B cell (primary cell): ENCODE measurements at regions of chr16 and their contacts with region 1.

Region 1: DNA sequence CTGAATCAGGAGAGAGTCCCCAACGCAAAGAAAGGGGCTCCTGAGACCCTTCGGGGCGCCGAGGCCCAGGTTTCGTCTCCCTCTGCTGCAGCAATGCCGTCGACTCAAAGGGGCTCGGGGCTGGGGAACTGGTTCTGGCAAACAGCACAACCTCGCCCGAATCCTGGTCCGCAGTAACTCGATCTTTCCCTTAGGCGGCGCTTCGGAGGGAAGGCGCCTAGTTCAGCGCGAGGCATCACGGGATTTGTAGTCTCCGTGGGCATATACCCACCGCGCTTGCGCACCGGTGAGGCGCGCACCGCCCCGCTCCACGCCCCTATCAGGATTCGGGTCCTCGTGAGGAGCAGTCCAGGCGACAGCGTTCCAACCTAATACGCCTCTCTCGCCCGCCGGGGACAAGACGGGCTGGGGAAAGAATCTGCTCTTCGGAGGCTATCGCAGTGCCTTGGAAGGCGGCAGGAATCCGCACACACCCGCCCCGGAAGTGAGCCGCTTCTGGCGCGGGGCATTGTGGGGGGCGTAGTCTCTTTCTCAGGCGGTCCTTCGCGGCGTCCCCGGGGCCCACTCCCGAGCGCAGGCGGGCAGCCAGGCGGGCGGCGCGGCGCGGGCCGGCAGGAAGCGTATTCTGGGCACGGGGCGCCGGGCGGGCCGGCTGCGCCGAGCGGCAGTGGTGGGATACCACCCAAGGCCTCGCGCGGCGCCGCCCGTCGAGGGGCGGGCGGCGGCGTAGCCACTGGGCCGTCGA is at the start of gene THAP11:
- DNase-seq: peak; percentile 98
- ATAC-seq: peak; percentile 58
- H3K4me3 ChIP-seq: peak within 1 kb of the TSS; percentile 74 to 98 (median 89)
- H3K4me3 Mint-ChIP-seq: peak within 1 kb of the TSS; percentile 96
- H3K27ac ChIP-seq: peak within 1 kb of the TSS; percentile 87 to 96
- H3K27ac Mint-ChIP-seq: peak within 1 kb of the TSS; percentile 98
- H3K4me1 ChIP-seq: peaks cover 31 to 42% of the 10 kb centered on the region in 2 donors
- H3K4me1 Mint-ChIP-seq: peaks cover 36% of the 10 kb centered on the region
- H3K27me3 ChIP-seq: no peaks in the 10 kb centered on the region
- H3K27me3 Mint-ChIP-seq: no peaks in the 10 kb centered on the region
- CTCF ChIP-seq: peak; percentile 83
- total RNA-seq, gene THAP11: 42.7 and 44.0 TPM in 2 replicates

Region 2: GRCh38 chr16:66751303-66751991 is 1090.5 kb before region 1 on chr16 and contains the start of gene DYNC1LI2:
- CTCF ChIA-PET with region 1: no interaction called
- POLR2A ChIA-PET with region 1: no interaction called
- intact Hi-C with region 1: loop called (anchors 10 kb)
- DNase-seq: peak; percentile 92
- ATAC-seq: peak; percentile 95
- H3K4me3 ChIP-seq: peak within 1 kb of the TSS; percentile 43 to 92 (median 88)
- H3K4me3 Mint-ChIP-seq: peak within 1 kb of the TSS; percentile 87
- H3K27ac ChIP-seq: peak within 1 kb of the TSS; percentile 13 to 85
- H3K27ac Mint-ChIP-seq: peak within 1 kb of the TSS; percentile 89
- H3K4me1 ChIP-seq: peaks cover 18 to 19% of the 10 kb centered on the region in 2 donors
- H3K4me1 Mint-ChIP-seq: peaks cover 33% of the 10 kb centered on the region
- H3K27me3 ChIP-seq: peaks cover 0 to 11% (median 8%) of the 10 kb centered on the region in 4 experiments
- H3K27me3 Mint-ChIP-seq: peaks cover 20% of the 10 kb centered on the region
- CTCF ChIP-seq: peak; percentile 87
- total RNA-seq, gene DYNC1LI2: 109 and 111 TPM in 2 replicates

Region 3: DNA sequence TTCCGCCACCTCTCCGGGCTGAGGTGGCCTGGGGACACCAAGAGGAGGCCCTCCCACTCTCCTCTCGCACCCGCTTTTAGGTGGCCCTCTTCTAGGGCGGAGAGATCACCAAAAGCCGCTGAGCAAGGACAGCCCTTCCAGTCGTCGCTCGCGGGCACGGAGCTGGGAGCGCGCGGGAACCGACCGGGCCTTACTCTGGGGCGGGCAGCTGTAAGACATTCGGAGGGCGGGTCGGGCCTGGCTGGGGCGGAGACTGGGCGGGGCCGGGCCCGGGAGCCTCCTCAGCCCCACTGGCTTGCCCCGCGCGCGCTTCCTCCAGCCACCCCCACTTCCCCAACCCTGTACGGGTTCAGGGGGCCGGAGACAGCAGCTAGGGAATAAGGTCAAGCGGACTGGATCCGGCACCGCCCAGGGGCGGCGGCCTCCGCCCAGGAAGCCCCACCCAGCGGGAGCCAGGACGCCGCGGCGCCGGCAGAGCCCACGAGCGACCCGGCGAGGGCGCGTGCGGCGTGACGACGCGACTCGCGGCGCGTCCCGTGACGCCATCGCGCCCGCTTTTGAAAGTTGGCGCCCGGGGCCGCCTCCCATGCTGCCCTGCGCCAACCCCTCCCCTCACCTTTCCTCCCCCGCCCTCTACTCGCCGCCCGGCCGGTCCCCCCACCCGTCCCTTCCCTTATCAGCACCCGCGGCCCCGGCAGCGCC is 280.0 kb before region 1 on chr16:
- CTCF ChIA-PET with region 1: no interaction called
- POLR2A ChIA-PET with region 1: no interaction called
- intact Hi-C with region 1: loop called (anchors 1 kb)
- DNase-seq: peak; percentile 99
- ATAC-seq: peak; percentile 74
- H3K4me3 ChIP-seq: peak overlapping the region; percentile 50 to 76 (median 60)
- H3K4me3 Mint-ChIP-seq: peak overlapping the region; percentile 89
- H3K27ac ChIP-seq: peak overlapping the region; percentile 71 to 80
- H3K27ac Mint-ChIP-seq: peak overlapping the region; percentile 95
- H3K4me1 ChIP-seq: peaks cover 42 to 55% of the 10 kb centered on the region in 2 donors
- H3K4me1 Mint-ChIP-seq: peaks cover 50% of the 10 kb centered on the region
- H3K27me3 ChIP-seq: no peaks in the 10 kb centered on the region
- H3K27me3 Mint-ChIP-seq: no peaks in the 10 kb centered on the region
- CTCF ChIP-seq: no peak

Region 4: GRCh38 chr16:67636713-67637490 is 205.0 kb before region 1 on chr16:
- CTCF ChIA-PET with region 1: no interaction called
- POLR2A ChIA-PET with region 1: no interaction called
- intact Hi-C with region 1: no loop called
- DNase-seq: no peak
- ATAC-seq: no peak
- H3K4me3 ChIP-seq: no peak overlapping the region
- H3K4me3 Mint-ChIP-seq: no peak overlapping the region
- H3K27ac ChIP-seq: no peak overlapping the region
- H3K27ac Mint-ChIP-seq: no peak overlapping the region
- H3K4me1 ChIP-seq: no peaks in the 10 kb centered on the region
- H3K4me1 Mint-ChIP-seq: no peaks in the 10 kb centered on the region
- H3K27me3 ChIP-seq: no peaks in the 10 kb centered on the region
- H3K27me3 Mint-ChIP-seq: no peaks in the 10 kb centered on the region
- CTCF ChIP-seq: no peak

Region 5: GRCh38 chr16:67667817-67668494 is 174.0 kb before region 1 on chr16:
- CTCF ChIA-PET with region 1: interaction called, 12 read pairs
- POLR2A ChIA-PET with region 1: no interaction called
- intact Hi-C with region 1: loop called (anchors 1 kb)
- DNase-seq: peak; percentile 89
- ATAC-seq: peak; percentile 81
- H3K4me3 ChIP-seq: peak overlapping the region in 4 of 5 experiments; percentile 67 to 91 (median 80)
- H3K4me3 Mint-ChIP-seq: peak overlapping the region; percentile 91
- H3K27ac ChIP-seq: peak overlapping the region; percentile 77 to 86
- H3K27ac Mint-ChIP-seq: peak overlapping the region; percentile 84
- H3K4me1 ChIP-seq: peaks cover 36 to 49% of the 10 kb centered on the region in 2 donors
- H3K4me1 Mint-ChIP-seq: peaks cover 49% of the 10 kb centered on the region
- H3K27me3 ChIP-seq: no peaks in the 10 kb centered on the region
- H3K27me3 Mint-ChIP-seq: no peaks in the 10 kb centered on the region
- CTCF ChIP-seq: peak; percentile 75

Region 6: DNA sequence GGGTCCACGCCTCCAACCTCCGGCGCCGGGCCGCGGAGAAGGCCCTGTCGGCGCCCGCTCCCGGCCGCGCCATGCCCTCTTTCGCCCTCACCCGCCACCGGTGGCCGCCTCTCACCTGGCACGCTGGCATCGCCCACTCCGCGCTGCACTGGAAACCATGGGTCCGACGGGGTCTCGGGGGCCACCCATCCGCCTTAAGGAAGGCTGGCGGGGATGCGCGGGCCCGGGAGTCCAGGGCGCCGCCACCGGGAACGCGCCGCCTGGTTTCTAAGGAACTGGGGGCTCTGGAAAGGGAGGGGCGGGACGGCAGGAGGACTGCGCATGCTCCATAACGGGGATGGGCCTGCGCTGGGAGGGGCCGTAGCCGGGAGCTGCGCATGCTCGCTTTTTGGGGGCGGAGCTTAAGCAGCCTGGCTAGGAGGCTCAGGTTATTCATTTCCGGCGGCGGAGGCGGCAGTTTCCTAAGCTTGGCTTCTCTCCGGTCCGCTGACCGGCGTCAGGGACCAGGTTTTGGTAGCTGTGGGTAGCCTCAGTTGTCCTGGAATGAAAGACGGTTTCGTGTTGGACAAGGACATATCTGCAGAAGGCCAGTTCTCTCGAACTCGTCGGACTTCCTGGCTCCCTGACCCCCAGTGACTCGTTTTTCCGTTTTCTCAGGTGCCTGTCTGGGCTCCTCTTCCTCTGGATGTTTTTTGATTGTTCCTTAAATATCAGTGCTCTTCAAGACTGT is 122.7 kb before region 1 on chr16 and contains the start of gene GFOD2:
- CTCF ChIA-PET with region 1: no interaction called
- POLR2A ChIA-PET with region 1: no interaction called
- intact Hi-C with region 1: loop called (anchors 1 kb)
- DNase-seq: peak; percentile 97
- ATAC-seq: peak; percentile 94
- H3K4me3 ChIP-seq: peak within 1 kb of the TSS; percentile 66 to 93 (median 87)
- H3K4me3 Mint-ChIP-seq: peak within 1 kb of the TSS; percentile 99
- H3K27ac ChIP-seq: peak within 1 kb of the TSS; percentile 89 to 93
- H3K27ac Mint-ChIP-seq: peak within 1 kb of the TSS; percentile 98
- H3K4me1 ChIP-seq: peaks cover 18 to 20% of the 10 kb centered on the region in 2 donors
- H3K4me1 Mint-ChIP-seq: peaks cover 38% of the 10 kb centered on the region
- H3K27me3 ChIP-seq: no peaks in the 10 kb centered on the region
- H3K27me3 Mint-ChIP-seq: no peaks in the 10 kb centered on the region
- CTCF ChIP-seq: no peak
- total RNA-seq, gene GFOD2: 18.1 and 18.2 TPM in 2 replicates

Region 7: DNA sequence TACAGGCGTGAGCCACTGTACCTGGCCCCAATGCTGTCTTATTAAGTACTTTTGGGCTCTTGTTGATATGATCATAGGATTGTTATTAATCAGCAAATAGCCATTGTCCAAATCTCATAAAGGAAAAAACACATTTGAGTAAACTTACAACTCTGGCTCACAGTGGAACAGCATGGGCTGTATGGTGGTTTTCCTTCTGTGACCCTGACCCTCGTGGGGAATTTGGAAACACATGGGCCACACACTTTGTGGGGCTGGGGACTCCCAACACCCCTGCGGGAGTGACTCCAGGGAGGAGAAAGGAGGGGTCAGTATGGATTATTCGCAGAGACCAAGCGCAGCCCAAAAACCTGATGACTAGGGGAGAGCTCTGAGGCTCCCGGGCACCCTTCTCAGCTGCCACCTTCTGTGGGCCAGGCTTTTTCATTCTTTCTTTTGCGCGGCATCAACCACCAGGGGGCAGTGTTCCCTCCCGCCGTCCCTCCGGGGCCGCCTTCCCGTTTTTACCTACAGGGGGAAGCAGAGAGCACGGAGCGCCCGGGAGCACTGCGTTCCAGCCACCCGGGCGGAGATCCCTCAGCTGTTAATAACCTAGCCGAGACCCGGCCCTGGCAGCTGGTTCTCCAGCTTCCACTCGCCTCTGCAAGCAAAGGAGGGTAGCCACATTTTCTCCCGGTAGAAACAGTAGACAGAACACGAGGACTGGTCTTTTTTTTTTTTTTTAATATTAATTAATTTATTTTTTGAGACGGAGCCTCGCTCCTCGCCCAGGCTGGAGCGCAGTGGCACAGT is 25.5 kb before region 1 on chr16:
- CTCF ChIA-PET with region 1: interaction called, 20 read pairs
- POLR2A ChIA-PET with region 1: interaction called, 3 read pairs
- intact Hi-C with region 1: loop called (anchors 1 kb)
- DNase-seq: peak; percentile 92
- ATAC-seq: peak; percentile 99
- H3K4me3 ChIP-seq: no peak overlapping the region
- H3K4me3 Mint-ChIP-seq: peak overlapping the region; percentile 65
- H3K27ac ChIP-seq: no peak overlapping the region
- H3K27ac Mint-ChIP-seq: peak overlapping the region; percentile 59
- H3K4me1 ChIP-seq: peaks cover 0 to 7% of the 10 kb centered on the region in 2 donors
- H3K4me1 Mint-ChIP-seq: peaks cover 6% of the 10 kb centered on the region
- H3K27me3 ChIP-seq: no peaks in the 10 kb centered on the region
- H3K27me3 Mint-ChIP-seq: no peaks in the 10 kb centered on the region
- CTCF ChIP-seq: peak; percentile 100

Region 8: DNA sequence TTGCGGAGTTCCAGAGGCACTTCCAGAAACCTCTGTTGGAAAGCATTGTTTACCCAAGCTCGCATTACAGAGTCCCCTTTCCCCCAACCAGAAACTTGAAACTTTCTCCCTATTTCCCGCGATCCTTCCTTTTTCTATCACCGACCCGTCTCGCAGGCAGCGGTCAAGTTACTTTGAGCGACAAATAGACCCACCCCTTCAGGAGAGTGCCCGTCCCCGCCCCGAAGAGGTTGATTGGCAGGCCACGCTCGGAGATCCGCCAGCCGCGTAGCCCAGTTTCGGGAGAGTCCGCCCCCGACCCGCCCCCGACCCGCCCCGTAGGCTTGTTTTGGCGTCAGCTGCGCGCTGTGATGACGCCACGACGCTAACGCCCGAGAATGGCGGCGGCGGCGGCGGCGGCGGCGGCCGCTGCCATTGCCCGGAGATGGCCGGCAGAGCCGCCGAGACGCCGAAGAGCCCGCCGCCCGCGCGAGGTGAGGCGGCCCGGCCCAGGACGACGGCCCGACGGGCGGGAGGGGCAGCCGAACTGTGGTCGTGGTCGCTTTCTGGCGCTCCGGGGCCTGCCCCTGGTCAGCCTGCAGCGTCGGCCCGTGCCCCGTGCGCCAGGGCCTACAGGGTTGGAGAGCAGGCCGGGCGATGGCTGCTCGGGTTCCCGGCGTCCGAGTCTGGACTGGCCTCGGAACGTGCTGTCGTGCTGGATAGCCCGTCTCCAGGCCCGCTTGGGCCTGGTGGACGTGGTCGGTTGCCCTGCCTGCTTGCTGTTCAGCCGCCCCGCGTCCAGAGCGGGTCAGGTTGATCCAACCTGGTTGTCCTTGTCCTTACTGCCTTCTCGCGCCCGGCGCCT is 51.2 kb after region 1 on chr16 and contains the start of gene PSKH1:
- CTCF ChIA-PET with region 1: no interaction called
- POLR2A ChIA-PET with region 1: no interaction called
- intact Hi-C with region 1: loop called (anchors 2 kb)
- DNase-seq: peak; percentile 95
- ATAC-seq: peak; percentile 99
- H3K4me3 ChIP-seq: peak within 1 kb of the TSS; percentile 61 to 92 (median 76)
- H3K4me3 Mint-ChIP-seq: peak within 1 kb of the TSS; percentile 90
- H3K27ac ChIP-seq: peak within 1 kb of the TSS; percentile 77 to 95
- H3K27ac Mint-ChIP-seq: peak within 1 kb of the TSS; percentile 85
- H3K4me1 ChIP-seq: peaks cover 16 to 18% of the 10 kb centered on the region in 2 donors
- H3K4me1 Mint-ChIP-seq: peaks cover 31% of the 10 kb centered on the region
- H3K27me3 ChIP-seq: no peaks in the 10 kb centered on the region
- H3K27me3 Mint-ChIP-seq: no peaks in the 10 kb centered on the region
- CTCF ChIP-seq: no peak
- total RNA-seq, gene PSKH1: 29.1 TPM in 2 replicates